Ovary (tissue), 10 donors: ENCODE measurements at regions of chr22 and their contacts with region 1.

Region 1: GRCh38 chr22:39135090-39135896 is 17.2 kb downstream of the CBX7 start:
- DNase-seq: peak in 2 of 5 donors; percentile 51 to 63
- H3K4me3 ChIP-seq: no peak overlapping the region
- H3K27ac ChIP-seq: no peak overlapping the region
- H3K4me1 ChIP-seq: peaks cover 7% of the 10 kb centered on the region
- H3K27me3 ChIP-seq: no peaks in the 10 kb centered on the region
- CTCF ChIP-seq: no peak
- EP300 ChIP-seq: no peak
- POLR2A ChIP-seq: no peak

Region 2: GRCh38 chr22:39013942-39014722 is 121.2 kb before region 1 on chr22 and contains the start of gene APOBEC3C:
- intact Hi-C with region 1: loop called in 1 of 4 experiments (anchors 10 kb)
- DNase-seq: peak; percentile 84 to 92 (median 88)
- H3K4me3 ChIP-seq: peak within 1 kb of the TSS; percentile 49
- H3K27ac ChIP-seq: peak within 1 kb of the TSS; percentile 71 to 88
- H3K4me1 ChIP-seq: peaks cover 4% of the 10 kb centered on the region
- H3K27me3 ChIP-seq: no peaks in the 10 kb centered on the region
- CTCF ChIP-seq: no peak
- EP300 ChIP-seq: no peak
- POLR2A ChIP-seq: peak; percentile 36
- total RNA-seq, gene APOBEC3C: 7.0 to 63.4 (median 52.4) TPM